Activated B cell treated with CpG ODN at 0.5 μM for 24 hours (primary cell): ENCODE measurements at regions of chr17 and their contacts with region 1.

Region 1: DNA sequence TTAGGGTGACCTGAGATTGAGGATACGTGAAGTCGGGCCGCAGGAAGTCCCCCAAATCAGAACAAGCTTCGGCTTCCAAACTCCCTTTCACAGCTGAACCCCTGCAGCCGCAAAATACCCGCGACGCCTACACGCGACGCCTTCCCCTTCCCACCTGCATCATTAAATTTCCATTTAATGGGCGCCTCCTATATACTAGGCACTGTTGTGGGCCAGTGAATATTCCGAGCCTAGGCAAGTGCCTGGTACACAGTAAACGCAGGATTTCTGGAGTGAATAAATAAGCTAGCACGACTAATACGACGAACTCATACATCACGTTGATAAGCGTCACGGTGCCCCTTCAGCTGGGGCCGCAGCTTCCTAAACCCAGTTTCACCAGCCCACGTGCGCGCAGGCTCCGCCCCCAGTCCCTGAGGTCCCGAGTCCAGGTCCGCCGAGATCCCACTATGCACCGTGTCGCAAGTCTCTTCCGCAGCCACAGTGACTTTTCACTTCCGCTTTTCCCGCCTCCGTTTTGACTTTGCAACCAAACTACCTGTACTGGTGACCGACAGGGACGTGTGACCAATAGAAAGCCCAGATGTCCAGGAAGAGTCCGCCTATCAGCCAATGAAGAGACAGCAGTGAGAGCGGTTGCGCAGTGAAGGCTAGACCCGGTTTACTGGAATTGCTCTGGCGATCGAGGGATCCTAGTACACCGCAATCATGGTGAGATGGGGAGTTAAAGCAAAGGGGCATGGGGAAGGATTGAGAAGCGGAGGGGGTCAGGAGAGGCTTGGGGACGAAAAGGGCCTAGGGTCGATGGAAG is at the start of gene PSMB3:
- DNase-seq: peak; percentile 87
- ATAC-seq: peak; percentile 89
- H3K4me3 Mint-ChIP-seq: peak within 1 kb of the TSS; percentile 98
- H3K27ac Mint-ChIP-seq: peak within 1 kb of the TSS; percentile 93
- H3K4me1 Mint-ChIP-seq: peaks cover 54% of the 10 kb centered on the region
- H3K27me3 Mint-ChIP-seq: peaks cover 25% of the 10 kb centered on the region
- CTCF ChIP-seq: no peak
- total RNA-seq, gene PSMB3: 234 and 250 TPM in 2 replicates

Region 2: GRCh38 chr17:38557836-38558727 is 194.2 kb before region 1 on chr17:
- CTCF ChIA-PET with region 1: interaction called, 5 read pairs
- POLR2A ChIA-PET with region 1: interaction called, 15 read pairs
- intact Hi-C with region 1: loop called (anchors 5 kb)
- DNase-seq: peak; percentile 86
- ATAC-seq: peak; percentile 80
- H3K4me3 Mint-ChIP-seq: peak overlapping the region; percentile 91
- H3K27ac Mint-ChIP-seq: peak overlapping the region; percentile 31
- H3K4me1 Mint-ChIP-seq: peaks cover 25% of the 10 kb centered on the region
- H3K27me3 Mint-ChIP-seq: peaks cover 18% of the 10 kb centered on the region
- CTCF ChIP-seq: no peak

Region 3: GRCh38 chr17:38656959-38657823 is 95.1 kb before region 1 on chr17:
- CTCF ChIA-PET with region 1: no interaction called
- POLR2A ChIA-PET with region 1: no interaction called
- intact Hi-C with region 1: no loop called
- DNase-seq: no peak
- ATAC-seq: no peak
- H3K4me3 Mint-ChIP-seq: no peak overlapping the region
- H3K27ac Mint-ChIP-seq: no peak overlapping the region
- H3K4me1 Mint-ChIP-seq: peaks cover 12% of the 10 kb centered on the region
- H3K27me3 Mint-ChIP-seq: peaks cover 47% of the 10 kb centered on the region
- CTCF ChIP-seq: no peak

Region 4: DNA sequence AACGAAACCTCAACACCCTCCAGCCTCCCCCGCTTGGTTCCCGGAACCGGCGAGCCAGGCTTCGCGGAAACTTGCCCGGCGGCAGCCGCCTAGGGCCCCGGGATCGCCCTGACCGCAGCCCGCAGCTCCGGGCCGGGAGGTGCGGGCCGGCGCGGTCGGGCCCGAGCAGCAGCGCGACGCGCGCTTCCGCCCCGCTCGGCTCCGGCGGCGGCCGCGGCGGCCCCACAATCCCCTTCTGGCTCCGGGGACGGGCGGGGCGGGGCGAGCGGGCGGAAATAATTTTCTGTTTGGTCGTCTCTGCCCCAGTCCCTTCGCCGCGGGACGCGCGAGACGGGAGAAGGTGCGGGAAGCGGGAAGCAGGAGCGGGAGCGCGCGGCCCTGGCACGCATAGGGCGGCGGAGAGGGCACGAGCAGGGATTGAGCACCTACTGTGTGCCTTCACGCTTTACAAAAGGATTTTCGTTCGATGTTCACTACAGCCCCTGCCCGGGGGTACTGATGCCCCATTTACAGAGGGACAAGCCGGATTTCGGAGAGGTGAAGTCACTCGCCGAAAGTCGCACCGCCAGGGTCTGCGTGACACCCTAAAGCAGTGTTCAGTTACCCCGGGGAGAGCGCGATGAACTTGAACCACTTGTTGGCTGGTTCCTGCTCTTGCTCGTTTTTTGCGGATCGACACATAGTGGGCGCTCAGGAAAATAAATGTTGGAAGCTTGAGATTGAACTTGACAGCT is 50.0 kb before region 1 on chr17:
- CTCF ChIA-PET with region 1: no interaction called
- POLR2A ChIA-PET with region 1: interaction called, 17 read pairs
- intact Hi-C with region 1: loop called (anchors 1 kb)
- DNase-seq: peak; percentile 77
- ATAC-seq: peak; percentile 28
- H3K4me3 Mint-ChIP-seq: peak overlapping the region; percentile 96
- H3K27ac Mint-ChIP-seq: peak overlapping the region; percentile 99
- H3K4me1 Mint-ChIP-seq: peaks cover 48% of the 10 kb centered on the region
- H3K27me3 Mint-ChIP-seq: no peaks in the 10 kb centered on the region
- CTCF ChIP-seq: no peak

Region 5: DNA sequence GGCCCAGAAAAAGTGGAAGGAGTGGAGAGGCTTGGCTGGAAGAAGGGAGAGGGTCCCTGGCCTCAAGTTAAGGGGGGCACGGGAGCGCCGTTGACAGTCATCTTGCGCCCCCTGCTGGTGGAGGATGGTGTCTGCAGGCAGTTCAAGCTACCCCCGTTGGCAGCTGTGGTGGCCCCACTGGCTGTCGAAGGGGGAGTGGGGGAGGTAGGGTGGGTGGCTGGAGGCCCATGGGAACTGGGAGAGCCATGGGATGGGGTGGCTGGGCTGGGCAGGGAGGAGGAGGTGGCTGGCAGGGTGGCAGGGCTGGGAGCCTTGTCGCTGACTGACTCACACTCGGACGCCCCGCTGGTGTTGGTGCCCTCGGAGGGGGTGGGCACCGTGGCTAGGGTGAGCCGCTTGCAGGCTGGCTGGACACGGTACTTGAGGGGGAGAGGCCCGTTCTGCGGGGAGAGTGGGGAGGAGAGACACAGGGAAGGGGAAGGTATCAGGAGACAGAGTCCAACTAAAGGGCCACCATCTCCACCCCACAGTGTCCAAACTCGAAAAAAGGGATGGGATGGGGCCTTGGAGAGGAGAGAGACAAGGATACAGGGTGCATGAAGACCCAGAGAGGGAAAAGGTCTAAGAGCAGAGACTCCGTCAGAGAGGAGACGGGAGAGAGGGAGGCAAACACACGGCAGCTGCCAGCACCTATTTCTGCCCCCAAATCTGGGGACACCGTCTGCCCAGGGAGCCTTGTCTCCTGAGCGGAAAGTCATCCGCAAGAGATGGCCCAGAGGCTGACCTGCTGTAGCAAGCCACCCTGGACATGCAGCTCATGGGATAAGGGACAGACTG is 16.9 kb before region 1 on chr17:
- CTCF ChIA-PET with region 1: interaction called, 11 read pairs
- POLR2A ChIA-PET with region 1: interaction called, 4 read pairs
- intact Hi-C with region 1: loop called (anchors 1 kb)
- DNase-seq: peak; percentile 76
- ATAC-seq: peak; percentile 39
- H3K4me3 Mint-ChIP-seq: no peak overlapping the region
- H3K27ac Mint-ChIP-seq: no peak overlapping the region
- H3K4me1 Mint-ChIP-seq: peaks cover 26% of the 10 kb centered on the region
- H3K27me3 Mint-ChIP-seq: peaks cover 5% of the 10 kb centered on the region
- CTCF ChIP-seq: no peak

Region 6: DNA sequence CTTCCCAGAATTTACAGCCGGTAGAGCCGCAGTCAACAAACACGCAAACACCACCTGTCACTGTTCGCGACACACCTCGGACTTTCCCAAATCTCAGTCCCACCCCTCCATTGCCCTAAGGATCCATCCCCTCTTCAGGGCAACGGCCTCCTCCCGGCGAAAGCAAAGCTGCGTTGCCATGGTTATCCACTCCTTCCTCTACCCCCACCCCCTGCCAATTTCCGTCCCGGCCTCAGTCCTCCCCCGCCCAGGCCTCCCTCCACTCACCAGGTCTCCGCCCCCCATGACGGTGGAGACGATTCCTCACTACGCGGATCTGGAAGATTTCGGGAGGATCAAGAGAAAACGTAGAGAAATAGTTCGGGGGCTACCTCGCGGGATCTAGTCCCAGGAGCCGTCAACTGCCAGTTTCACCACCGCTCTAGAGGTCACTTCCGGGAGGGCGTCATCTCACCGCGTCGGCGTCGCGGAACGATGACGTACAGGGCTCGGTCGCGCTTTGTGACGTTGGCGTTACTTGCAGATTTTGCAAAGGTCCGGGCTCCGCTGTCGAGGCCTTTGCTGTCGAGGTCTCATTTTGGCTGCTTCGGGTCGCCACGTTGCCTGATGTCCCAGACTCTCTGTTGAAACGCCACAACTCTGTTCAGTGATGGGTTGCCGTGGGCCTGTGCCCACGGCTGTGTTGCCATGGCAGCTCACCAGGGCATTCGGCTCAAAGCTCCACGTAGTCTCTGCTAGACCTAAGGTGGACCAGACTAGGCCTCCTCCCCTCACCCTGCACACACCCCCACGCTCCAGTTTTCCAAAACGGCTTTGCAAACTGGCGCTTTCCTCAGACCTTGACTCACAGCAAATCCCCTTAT is 72.8 kb after region 1 on chr17 and contains the start of gene CWC25:
- CTCF ChIA-PET with region 1: no interaction called
- POLR2A ChIA-PET with region 1: no interaction called
- intact Hi-C with region 1: loop called (anchors 1 kb)
- DNase-seq: peak; percentile 99
- ATAC-seq: peak; percentile 80
- H3K4me3 Mint-ChIP-seq: peak within 1 kb of the TSS; percentile 98
- H3K27ac Mint-ChIP-seq: peak within 1 kb of the TSS; percentile 99
- H3K4me1 Mint-ChIP-seq: peaks cover 29% of the 10 kb centered on the region
- H3K27me3 Mint-ChIP-seq: peaks cover 3% of the 10 kb centered on the region
- CTCF ChIP-seq: no peak
- total RNA-seq, gene CWC25: 35.6 and 38.3 TPM in 2 replicates

Region 7: GRCh38 chr17:39461113-39461925 is 709.0 kb after region 1 on chr17 and contains the start of gene CDK12:
- CTCF ChIA-PET with region 1: no interaction called
- POLR2A ChIA-PET with region 1: interaction called, 4 read pairs
- intact Hi-C with region 1: loop called (anchors 1 kb)
- DNase-seq: peak; percentile 87
- ATAC-seq: peak; percentile 87
- H3K4me3 Mint-ChIP-seq: peak within 1 kb of the TSS; percentile 97
- H3K27ac Mint-ChIP-seq: peak within 1 kb of the TSS; percentile 98
- H3K4me1 Mint-ChIP-seq: peaks cover 50% of the 10 kb centered on the region
- H3K27me3 Mint-ChIP-seq: no peaks in the 10 kb centered on the region
- CTCF ChIP-seq: no peak
- total RNA-seq, gene CDK12: 100 and 118 TPM in 2 replicates